Endothelial cell of umbilical vein (primary cell): ENCODE measurements at regions of chr2 and their contacts with region 1.

Region 1: GRCh38 chr2:235754352-235755207 is 260.7 kb downstream of the AGAP1 start:
- DNase-seq: no peak
- H3K4me3 ChIP-seq: no peak overlapping the region
- H3K27ac ChIP-seq: no peak overlapping the region
- H3K4me1 ChIP-seq: no peaks in the 10 kb centered on the region
- H3K27me3 ChIP-seq: no peaks in the 10 kb centered on the region
- CTCF ChIP-seq: no peak
- POLR2A ChIP-seq: no peak

Region 2: GRCh38 chr2:235642446-235643098 is 112.0 kb before region 1 on chr2:
- CTCF ChIA-PET with region 1: no interaction called
- POLR2A ChIA-PET with region 1: no interaction called
- dilution Hi-C with region 1: no loop called
- intact Hi-C with region 1: no loop called
- DNase-seq: no peak
- H3K4me3 ChIP-seq: no peak overlapping the region
- H3K27ac ChIP-seq: no peak overlapping the region
- H3K4me1 ChIP-seq: no peaks in the 10 kb centered on the region
- H3K27me3 ChIP-seq: no peaks in the 10 kb centered on the region
- CTCF ChIP-seq: no peak
- POLR2A ChIP-seq: no peak

Region 3: DNA sequence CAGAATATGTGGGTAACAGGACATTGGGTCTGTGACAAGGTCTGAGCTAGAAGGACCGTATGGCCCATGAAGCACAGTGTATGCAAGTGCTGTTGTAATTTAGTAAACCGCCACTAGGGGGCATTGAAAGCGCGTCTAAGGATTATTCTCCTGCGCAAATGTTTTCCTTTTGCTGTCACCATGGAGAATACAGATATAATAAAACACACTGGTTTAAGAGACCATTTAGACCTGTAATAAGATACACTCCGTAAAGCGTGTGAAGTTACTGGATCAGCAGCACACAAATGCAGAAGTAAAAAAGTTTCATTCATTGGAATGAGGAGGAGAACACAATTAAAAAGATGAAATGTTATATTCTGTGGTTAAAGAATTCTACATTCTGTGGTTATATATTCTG is 11.7 kb after region 1 on chr2:
- CTCF ChIA-PET with region 1: interaction called, 10 read pairs
- POLR2A ChIA-PET with region 1: no interaction called
- dilution Hi-C with region 1: no loop called
- intact Hi-C with region 1: no loop called
- DNase-seq: peak; percentile 90
- H3K4me3 ChIP-seq: no peak overlapping the region
- H3K27ac ChIP-seq: no peak overlapping the region
- H3K4me1 ChIP-seq: no peaks in the 10 kb centered on the region
- H3K27me3 ChIP-seq: no peaks in the 10 kb centered on the region
- CTCF ChIP-seq: peak; percentile 67 to 73
- POLR2A ChIP-seq: no peak